ENCODE measurements at regions of chr2 and their contacts with region 1.

Region 1: DNA sequence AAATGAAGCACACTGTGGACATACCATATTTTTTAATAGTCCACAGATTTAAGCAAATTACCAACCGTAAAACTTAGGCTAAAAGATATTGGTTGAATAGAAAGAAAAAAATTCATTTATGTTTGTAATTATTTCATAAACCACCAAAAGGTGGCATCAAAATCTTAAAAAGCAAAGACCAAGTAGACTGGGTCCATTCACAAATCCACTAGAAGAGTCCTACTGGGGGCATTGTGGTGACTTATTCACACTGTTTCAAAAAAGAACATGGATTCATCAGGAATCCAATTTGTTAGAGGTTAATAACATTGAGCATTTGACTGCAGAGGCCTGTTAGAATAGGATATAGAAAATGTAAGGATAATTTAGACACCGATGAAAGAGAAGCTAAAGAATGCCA is 194.9 kb upstream of the KYNU start:
- DNase-seq: peak; percentile 45
- ATAC-seq: peak; percentile 49
- H3K4me3 ChIP-seq: no peak overlapping the region
- H3K27ac ChIP-seq: no peak overlapping the region
- H3K4me1 ChIP-seq: peaks cover 2% of the 10 kb centered on the region; the same call in 1 of the 2 replicates
- H3K27me3 ChIP-seq: no peaks in the 10 kb centered on the region
- CTCF ChIP-seq: peak; percentile 51
- POLR2A ChIP-seq: no peak
- RAD21 ChIP-seq: peak; percentile 60

Region 2: DNA sequence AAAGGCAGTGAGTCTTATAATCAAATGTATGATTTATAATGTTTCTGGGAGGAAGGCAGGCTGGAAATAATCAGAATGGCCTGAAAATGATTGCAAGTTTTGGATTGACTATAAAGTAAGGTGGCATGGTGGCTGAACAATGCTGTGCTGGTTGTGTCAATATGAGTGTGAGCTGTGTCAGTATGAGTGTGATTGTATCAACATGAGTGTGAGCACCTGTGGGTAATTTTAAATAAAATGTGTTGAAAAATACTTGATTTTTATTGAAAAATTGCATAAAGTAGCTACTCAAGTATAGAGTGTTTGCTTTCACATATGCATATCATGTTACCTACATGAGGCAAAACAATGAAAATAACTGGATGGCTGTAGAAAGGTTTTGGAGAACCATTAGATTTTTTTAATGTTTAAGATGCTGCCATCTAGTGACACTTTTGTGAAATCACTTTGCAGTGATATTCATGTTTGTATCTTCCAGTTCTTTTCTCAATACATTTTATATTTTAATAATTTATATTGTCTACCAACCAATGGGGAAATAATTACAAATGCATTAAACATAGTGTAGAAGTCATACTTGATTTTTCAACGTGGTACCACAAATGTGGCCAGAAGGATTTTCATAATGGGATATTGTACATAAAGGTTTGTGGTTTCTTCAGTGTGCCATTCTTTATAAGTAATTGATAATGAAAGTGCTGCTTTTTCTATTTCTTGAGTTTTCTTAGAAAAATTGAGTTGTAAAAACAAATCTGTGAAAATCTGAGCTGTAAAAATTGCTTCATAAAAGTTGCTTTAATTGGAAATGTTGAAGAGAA is 298.2 kb after region 1 on chr2:
- CTCF ChIA-PET with region 1: interaction called, 17 read pairs
- POLR2A ChIA-PET with region 1: no interaction called
- dilution Hi-C with region 1: no loop called
- in situ Hi-C with region 1: loop called (anchors 5 kb)
- intact Hi-C with region 1: loop called (anchors 1 kb)
- DNase-seq: peak; percentile 75
- ATAC-seq: peak; percentile 82
- H3K4me3 ChIP-seq: no peak overlapping the region
- H3K27ac ChIP-seq: no peak overlapping the region
- H3K4me1 ChIP-seq: no peaks in the 10 kb centered on the region
- H3K27me3 ChIP-seq: no peaks in the 10 kb centered on the region
- CTCF ChIP-seq: peak; percentile 65
- POLR2A ChIP-seq: no peak
- RAD21 ChIP-seq: peak; percentile 67